ENCODE measurements at regions of chrX and their contacts with region 1.

Region 1: DNA sequence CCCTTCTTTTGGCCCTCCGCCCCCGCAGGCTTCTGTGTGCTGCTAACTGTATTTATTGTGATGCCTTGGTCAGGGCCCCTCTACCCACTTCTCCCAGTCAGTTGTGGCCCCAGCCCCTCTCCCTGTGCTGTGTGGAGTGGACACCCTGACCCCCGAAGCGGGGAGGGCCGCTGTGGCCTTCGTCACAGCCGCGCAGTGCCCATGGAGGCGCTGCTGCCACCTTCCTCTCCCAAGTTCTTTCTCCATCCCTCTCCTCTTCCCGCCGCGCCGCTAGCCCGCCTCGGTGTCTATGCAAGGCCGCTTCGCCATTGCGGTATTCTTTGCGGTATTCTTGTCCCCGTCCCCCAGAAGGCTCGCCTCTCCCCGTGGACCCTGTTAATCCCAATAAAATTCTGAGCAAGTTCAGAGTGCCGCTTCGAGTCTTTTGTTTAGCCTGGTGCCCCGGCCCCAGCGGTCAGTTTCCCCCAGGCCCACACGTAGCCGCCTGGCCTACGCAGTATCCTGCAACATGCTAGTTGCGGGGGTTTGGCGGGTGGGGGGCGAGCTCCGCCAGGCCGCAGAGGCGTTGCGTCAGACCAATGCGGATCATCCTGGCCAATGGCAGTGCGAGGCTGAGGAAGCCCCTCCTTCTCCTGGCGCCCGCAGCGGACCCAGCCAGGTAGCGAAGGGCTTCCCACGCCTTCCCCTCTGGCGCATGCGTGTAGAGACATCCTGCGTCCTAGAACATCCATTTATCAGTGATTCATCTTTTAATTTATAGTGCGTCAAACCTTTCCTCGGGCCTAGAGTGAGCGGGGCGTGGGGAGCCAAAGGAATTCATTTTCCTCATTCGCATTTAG is 5.6 kb upstream of the KANTR start:
- DNase-seq: peak; percentile 70
- CTCF ChIP-seq: no peak

Region 2: DNA sequence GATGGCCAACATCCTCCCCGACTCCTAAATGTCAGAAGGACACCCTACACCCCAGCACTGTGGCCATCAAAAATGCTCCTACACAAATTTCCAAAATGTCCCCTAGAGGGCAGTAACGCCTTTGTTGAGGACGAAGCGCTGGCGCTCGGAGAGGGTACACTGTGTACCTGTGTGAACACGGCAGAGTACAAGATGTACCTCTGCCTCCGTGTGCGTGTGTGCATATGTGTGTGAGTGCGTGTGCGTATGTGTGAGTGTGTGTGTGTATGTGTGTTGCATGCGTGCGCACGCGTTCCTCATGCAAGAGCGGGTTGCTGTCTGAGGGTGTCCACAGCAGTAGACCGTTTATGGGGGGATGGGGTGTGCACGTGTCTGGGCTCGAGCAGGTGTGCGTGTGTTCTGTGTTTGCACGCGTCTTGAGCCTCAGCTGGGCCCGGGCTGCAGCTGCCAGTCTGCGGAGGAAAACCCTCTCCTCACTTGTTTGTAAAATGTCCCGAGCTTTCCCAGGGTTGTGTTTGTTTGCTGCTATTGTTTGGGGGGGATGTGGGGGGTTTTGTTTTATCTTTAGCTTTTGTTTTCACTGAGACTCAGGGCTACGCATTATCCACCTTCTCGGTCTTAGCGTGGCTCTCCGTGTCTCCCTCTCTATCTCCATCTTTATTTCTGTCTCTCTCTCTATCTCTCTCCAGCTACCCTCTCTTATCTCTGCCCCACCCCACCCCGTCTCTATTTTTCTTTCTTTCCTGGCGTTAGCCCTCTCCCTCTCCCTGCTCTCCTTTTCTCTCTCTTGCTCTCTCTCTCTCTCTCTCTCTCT is 16.5 kb before region 1 on chrX:
- CTCF ChIA-PET with region 1: interaction called, 19 read pairs
- POLR2A ChIA-PET with region 1: interaction called, 7 read pairs
- DNase-seq: peak; percentile 73
- CTCF ChIP-seq: peak; percentile 25

Region 3: DNA sequence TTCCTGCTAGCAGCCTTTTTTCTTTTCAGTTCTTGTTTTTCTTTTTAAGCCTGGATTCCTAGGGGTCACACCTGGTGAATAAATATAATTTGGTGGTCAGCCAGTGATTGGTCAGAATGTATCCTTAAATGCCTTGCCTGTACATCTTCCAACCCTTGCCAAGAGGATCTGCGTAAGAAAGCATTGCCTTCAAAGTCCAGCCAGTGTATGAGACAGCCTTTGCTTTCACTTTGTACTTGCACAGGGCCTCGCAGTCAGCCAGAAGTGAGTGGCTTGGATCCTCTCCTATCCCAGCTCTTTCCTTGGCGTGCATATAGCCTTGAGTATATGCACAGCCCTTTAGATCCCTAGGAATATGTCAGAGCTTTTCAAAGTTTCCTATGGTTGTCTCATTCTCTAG is 27.7 kb after region 1 on chrX:
- CTCF ChIA-PET with region 1: no interaction called
- POLR2A ChIA-PET with region 1: no interaction called
- DNase-seq: no peak
- CTCF ChIP-seq: no peak

Region 4: DNA sequence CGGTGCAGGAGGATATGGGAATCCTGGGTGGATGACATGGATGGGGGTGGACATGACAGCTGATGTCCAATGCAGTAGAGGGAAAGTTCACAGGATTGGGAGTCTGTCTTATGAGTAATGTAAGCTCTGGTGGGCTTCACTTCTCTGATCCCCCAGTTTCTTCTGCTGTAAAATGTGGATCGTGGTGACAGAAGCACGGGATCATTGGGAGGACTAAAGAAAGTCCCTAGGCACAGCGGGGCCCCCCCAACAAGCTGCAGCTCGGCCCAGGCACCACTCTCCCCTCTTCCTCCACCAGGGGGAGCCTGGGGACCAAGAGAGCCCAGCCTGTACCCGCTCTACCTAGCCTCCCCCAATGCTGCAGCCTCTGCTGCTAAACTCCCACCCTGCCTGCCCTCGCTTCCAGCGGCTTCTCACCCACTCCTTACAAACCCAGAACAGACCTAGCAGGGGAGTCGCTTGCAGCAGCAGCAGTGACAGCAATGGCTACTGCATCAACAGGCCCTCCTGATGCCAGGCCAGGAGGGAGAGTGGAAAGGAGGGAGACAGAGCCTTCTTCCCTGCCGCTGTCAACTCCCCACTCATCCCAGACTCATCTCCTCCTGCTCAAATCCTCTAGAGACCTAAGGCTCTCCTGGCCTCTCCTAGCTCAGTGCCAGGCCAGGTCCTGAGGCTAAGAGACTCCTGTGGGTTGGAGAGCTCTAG is 229.2 kb after region 1 on chrX:
- CTCF ChIA-PET with region 1: no interaction called
- POLR2A ChIA-PET with region 1: no interaction called
- DNase-seq: peak; percentile 77
- CTCF ChIP-seq: peak; percentile 71

Measured in GM10248 (cell line).